Activated T-helper 2 cell treated with anti-CD3 and anti-CD28 coated beads, Interferon-gamma antibody, Interleukin-2, Interleukin-4, amounts not matched to agents 10 μg/mL and 5 μg/mL and 100 μg/mL, durations not matched to agents 14 hours and 24 hours and 36 hours (primary cell): ENCODE measurements at regions of chr1 and their contacts with region 1.

Region 1: GRCh38 chr1:239898062-239898730 is 193.5 kb upstream of the FMN2 start:
- DNase-seq: peak; percentile 57
- H3K4me3 Mint-ChIP-seq: no peak overlapping the region
- H3K27ac Mint-ChIP-seq: no peak overlapping the region
- H3K4me1 Mint-ChIP-seq: no peaks in the 10 kb centered on the region
- H3K27me3 Mint-ChIP-seq: peaks cover 13% of the 10 kb centered on the region

Region 2: GRCh38 chr1:239308701-239309333 is 589.4 kb before region 1 on chr1:
- intact Hi-C with region 1: loop called (anchors 1 kb)
- DNase-seq: peak; percentile 9
- H3K4me3 Mint-ChIP-seq: no peak overlapping the region
- H3K27ac Mint-ChIP-seq: no peak overlapping the region
- H3K4me1 Mint-ChIP-seq: no peaks in the 10 kb centered on the region
- H3K27me3 Mint-ChIP-seq: peaks cover 2% of the 10 kb centered on the region

Region 3: DNA sequence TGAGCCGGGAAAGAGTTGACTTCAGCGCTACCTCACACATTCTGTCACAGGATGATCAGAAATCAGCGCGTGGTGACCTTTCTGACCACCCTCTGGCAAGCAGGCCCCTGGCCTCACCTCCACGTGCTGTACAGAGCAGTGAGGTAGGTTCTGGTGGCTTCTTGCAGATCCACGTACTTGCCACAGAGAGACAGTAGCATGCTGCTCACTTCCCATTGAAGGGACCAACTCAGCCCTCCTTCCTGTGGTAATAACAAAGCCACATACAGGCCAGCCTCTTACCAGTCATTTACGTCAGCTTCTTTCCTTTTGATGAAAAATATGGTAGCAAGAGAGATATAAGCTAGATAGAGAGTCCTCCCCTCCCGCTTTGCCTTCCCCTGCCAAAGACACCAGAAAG is 311.1 kb before region 1 on chr1:
- intact Hi-C with region 1: loop called (anchors 10 kb)
- DNase-seq: peak; percentile 18
- H3K4me3 Mint-ChIP-seq: no peak overlapping the region
- H3K27ac Mint-ChIP-seq: no peak overlapping the region
- H3K4me1 Mint-ChIP-seq: peaks cover 8% of the 10 kb centered on the region
- H3K27me3 Mint-ChIP-seq: peaks cover 12% of the 10 kb centered on the region

Region 4: GRCh38 chr1:239792157-239792556 is 106.0 kb before region 1 on chr1:
- intact Hi-C with region 1: loop called (anchors 5 kb)
- DNase-seq: no peak
- H3K4me3 Mint-ChIP-seq: no peak overlapping the region
- H3K27ac Mint-ChIP-seq: no peak overlapping the region
- H3K4me1 Mint-ChIP-seq: peaks cover 6% of the 10 kb centered on the region
- H3K27me3 Mint-ChIP-seq: peaks cover 12% of the 10 kb centered on the region

Region 5: GRCh38 chr1:239960366-239960765 is 62.2 kb after region 1 on chr1:
- intact Hi-C with region 1: no loop called
- DNase-seq: no peak
- H3K4me3 Mint-ChIP-seq: no peak overlapping the region
- H3K27ac Mint-ChIP-seq: no peak overlapping the region
- H3K4me1 Mint-ChIP-seq: no peaks in the 10 kb centered on the region
- H3K27me3 Mint-ChIP-seq: peaks cover 3% of the 10 kb centered on the region